ENCODE measurements at regions of chr5 and their contacts with region 1.

Region 1: GRCh38 chr5:108748401-108749127 is 867 bp downstream of the FER start:
- DNase-seq: peak; percentile 99
- H3K4me3 ChIP-seq: peak overlapping the region; percentile 81 to 98 (median 94)
- H3K27ac ChIP-seq: peak overlapping the region; percentile 98
- H3K4me1 ChIP-seq: peaks cover 14% of the 10 kb centered on the region
- H3K27me3 ChIP-seq: no peaks in the 10 kb centered on the region
- CTCF ChIP-seq: no peak
- POLR2A ChIP-seq: peak; percentile 98

Region 2: GRCh38 chr5:108381954-108382783 is 366.4 kb before region 1 on chr5 and contains the start of gene FBXL17:
- CTCF ChIA-PET with region 1: no interaction called
- POLR2A ChIA-PET with region 1: no interaction called
- dilution Hi-C with region 1: no loop called
- intact Hi-C with region 1: loop called (anchors 5 kb)
- DNase-seq: peak; percentile 81
- H3K4me3 ChIP-seq: peak within 1 kb of the TSS; percentile 45 to 99 (median 64)
- H3K27ac ChIP-seq: peak within 1 kb of the TSS; percentile 90
- H3K4me1 ChIP-seq: peaks cover 17% of the 10 kb centered on the region
- H3K27me3 ChIP-seq: no peaks in the 10 kb centered on the region
- CTCF ChIP-seq: no peak
- POLR2A ChIP-seq: peak; percentile 66
- total RNA-seq, gene FBXL17: 8.8 and 13.9 TPM in 2 replicates

Region 3: GRCh38 chr5:108650997-108651396 is 97.6 kb before region 1 on chr5:
- CTCF ChIA-PET with region 1: no interaction called
- POLR2A ChIA-PET with region 1: no interaction called
- dilution Hi-C with region 1: no loop called
- intact Hi-C with region 1: loop called (anchors 1 kb)
- DNase-seq: peak; percentile 88
- H3K4me3 ChIP-seq: no peak overlapping the region
- H3K27ac ChIP-seq: peak overlapping the region; percentile 84
- H3K4me1 ChIP-seq: peaks cover 38% of the 10 kb centered on the region
- H3K27me3 ChIP-seq: no peaks in the 10 kb centered on the region
- CTCF ChIP-seq: no peak
- POLR2A ChIP-seq: no peak

Region 4: GRCh38 chr5:108727651-108728565 is 20.7 kb before region 1 on chr5:
- CTCF ChIA-PET with region 1: interaction called, 13 read pairs
- POLR2A ChIA-PET with region 1: interaction called, 17 read pairs
- dilution Hi-C with region 1: no loop called
- intact Hi-C with region 1: loop called (anchors 1 kb)
- DNase-seq: peak; percentile 92
- H3K4me3 ChIP-seq: peak overlapping the region; percentile 54 to 84 (median 71)
- H3K27ac ChIP-seq: peak overlapping the region; percentile 68
- H3K4me1 ChIP-seq: peaks cover 23% of the 10 kb centered on the region
- H3K27me3 ChIP-seq: no peaks in the 10 kb centered on the region
- CTCF ChIP-seq: no peak
- POLR2A ChIP-seq: peak; percentile 92

Region 5: GRCh38 chr5:108801776-108802175 is 53.2 kb after region 1 on chr5:
- CTCF ChIA-PET with region 1: no interaction called
- POLR2A ChIA-PET with region 1: no interaction called
- dilution Hi-C with region 1: no loop called
- intact Hi-C with region 1: loop called (anchors 1 kb)
- DNase-seq: peak; percentile 84
- H3K4me3 ChIP-seq: no peak overlapping the region
- H3K27ac ChIP-seq: peak overlapping the region; percentile 75
- H3K4me1 ChIP-seq: peaks cover 10% of the 10 kb centered on the region
- H3K27me3 ChIP-seq: no peaks in the 10 kb centered on the region
- CTCF ChIP-seq: no peak
- POLR2A ChIP-seq: no peak

Region 6: DNA sequence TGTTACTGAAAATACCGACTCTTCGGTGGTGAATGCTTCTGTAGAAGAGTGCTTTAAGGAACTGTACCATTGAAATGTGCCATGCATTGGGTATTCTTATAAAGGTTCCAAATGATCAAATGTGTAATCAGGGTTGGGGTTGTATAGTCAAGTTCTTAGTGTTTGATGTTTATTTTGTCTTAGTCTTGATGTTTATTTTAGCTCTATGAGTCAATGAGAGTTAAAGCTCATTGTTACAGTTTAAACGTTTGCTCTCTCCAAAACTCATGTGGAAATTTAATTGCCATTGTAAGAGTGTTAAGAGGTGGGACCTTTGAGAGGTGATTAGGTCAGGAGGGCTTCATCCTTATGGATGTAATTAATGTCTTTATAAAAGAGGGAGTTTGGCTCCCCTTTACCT is 152.1 kb after region 1 on chr5:
- CTCF ChIA-PET with region 1: no interaction called
- POLR2A ChIA-PET with region 1: no interaction called
- dilution Hi-C with region 1: no loop called
- intact Hi-C with region 1: loop called (anchors 5 kb)
- DNase-seq: peak; percentile 24
- H3K4me3 ChIP-seq: no peak overlapping the region
- H3K27ac ChIP-seq: no peak overlapping the region
- H3K4me1 ChIP-seq: peaks cover 21% of the 10 kb centered on the region
- H3K27me3 ChIP-seq: no peaks in the 10 kb centered on the region
- CTCF ChIP-seq: no peak
- POLR2A ChIP-seq: no peak

Region 7: GRCh38 chr5:109409844-109410388 is 661.4 kb after region 1 on chr5 and contains the start of gene PJA2:
- CTCF ChIA-PET with region 1: no interaction called
- POLR2A ChIA-PET with region 1: no interaction called
- dilution Hi-C with region 1: no loop called
- intact Hi-C with region 1: loop called (anchors 1 kb)
- DNase-seq: peak; percentile 100
- H3K4me3 ChIP-seq: peak within 1 kb of the TSS; percentile 47 to 97 (median 88)
- H3K27ac ChIP-seq: peak within 1 kb of the TSS; percentile 97
- H3K4me1 ChIP-seq: peaks cover 18% of the 10 kb centered on the region
- H3K27me3 ChIP-seq: no peaks in the 10 kb centered on the region
- CTCF ChIP-seq: peak in 1 of 2 donors; percentile 22
- POLR2A ChIP-seq: peak; percentile 49
- total RNA-seq, gene PJA2: 61.8 and 64.9 TPM in 2 replicates